CD4-positive, alpha-beta memory T cell (primary cell): ENCODE measurements at regions of chr13 and their contacts with region 1.

Region 1: DNA sequence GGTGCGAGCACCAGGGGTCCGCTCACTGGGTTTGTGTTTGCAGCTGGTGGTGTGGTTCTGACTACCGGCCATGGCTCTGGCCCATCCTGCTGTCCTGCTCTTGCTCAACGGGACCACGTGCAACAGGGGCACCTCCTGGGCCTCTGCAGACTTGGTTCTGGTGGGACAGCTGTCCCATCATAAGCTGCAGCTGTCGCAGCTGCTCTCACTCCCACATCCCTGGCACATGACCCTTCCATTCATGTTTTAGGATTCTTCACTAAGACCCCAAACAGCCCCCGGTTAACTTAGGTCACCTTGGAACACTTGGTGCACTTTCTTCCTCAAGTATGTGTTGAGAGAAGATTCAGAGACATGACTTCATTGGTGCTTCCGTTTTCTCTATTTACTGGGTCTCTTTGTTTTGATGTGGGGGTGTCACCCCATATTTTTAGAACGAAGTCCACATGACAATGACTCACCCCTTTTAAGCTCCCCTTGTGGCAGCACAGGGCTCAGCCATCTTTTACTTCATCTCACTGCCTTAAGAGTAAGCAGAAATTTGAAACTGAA is 68.4 kb upstream of the ARHGEF7 start:
- DNase-seq: peak in 1 of 5 donors; percentile 7
- H3K4me3 ChIP-seq: no peak overlapping the region
- H3K4me3 Mint-ChIP-seq: no peak overlapping the region
- H3K27ac ChIP-seq: no peak overlapping the region
- H3K27ac Mint-ChIP-seq: no peak overlapping the region
- H3K4me1 ChIP-seq: no peaks in the 10 kb centered on the region
- H3K4me1 Mint-ChIP-seq: peaks cover 0 to 5% (median under 1%) of the 10 kb centered on the region in 4 donors
- H3K27me3 ChIP-seq: no peaks in the 10 kb centered on the region
- H3K27me3 Mint-ChIP-seq: peaks cover 8 to 15% of the 10 kb centered on the region in 2 donors

Region 2: DNA sequence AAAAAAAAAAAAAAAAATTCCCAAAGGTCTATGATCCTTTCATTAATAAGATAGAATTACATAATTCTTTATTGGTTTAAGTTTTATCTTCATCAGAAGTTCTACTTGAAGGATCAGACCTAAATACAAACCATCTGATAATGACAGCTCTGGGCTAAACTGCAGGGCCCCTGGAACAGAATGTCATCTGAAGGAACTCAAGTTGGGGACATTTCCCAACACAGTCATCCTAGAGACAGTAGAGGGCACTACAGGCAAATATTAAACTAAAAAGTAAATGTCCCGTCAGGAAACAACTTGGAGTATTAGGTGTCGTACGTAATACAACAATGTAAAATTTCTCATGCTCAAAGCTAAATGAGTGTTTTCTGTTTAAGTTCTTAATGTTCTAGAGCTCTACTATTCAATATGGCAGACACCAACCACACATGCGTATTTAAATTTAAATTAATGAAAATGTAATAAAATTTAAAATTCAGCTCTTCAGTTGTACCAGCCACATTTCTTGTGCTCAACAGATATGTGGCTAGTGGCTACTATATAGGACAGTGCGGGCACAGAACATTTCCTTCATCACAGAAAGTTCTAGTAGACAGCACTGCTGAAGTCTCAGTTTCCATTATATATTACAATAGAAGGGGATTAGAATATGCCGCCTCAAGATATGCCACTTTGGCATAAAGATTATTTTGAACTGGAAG is 453.1 kb before region 1 on chr13:
- CTCF ChIA-PET with region 1: no interaction called
- POLR2A ChIA-PET with region 1: no interaction called
- intact Hi-C with region 1: loop called (anchors 5 kb)
- DNase-seq: peak in 4 of 5 donors; percentile 26 to 36 (median 30)
- H3K4me3 ChIP-seq: no peak overlapping the region
- H3K4me3 Mint-ChIP-seq: no peak overlapping the region
- H3K27ac ChIP-seq: no peak overlapping the region
- H3K27ac Mint-ChIP-seq: no peak overlapping the region
- H3K4me1 ChIP-seq: no peaks in the 10 kb centered on the region
- H3K4me1 Mint-ChIP-seq: peaks cover 0 to 2% (median 1%) of the 10 kb centered on the region in 4 donors
- H3K27me3 ChIP-seq: no peaks in the 10 kb centered on the region
- H3K27me3 Mint-ChIP-seq: peaks cover 0 to 2% of the 10 kb centered on the region in 2 donors